ENCODE measurements at regions of chr4 and their contacts with region 1.

Region 1: DNA sequence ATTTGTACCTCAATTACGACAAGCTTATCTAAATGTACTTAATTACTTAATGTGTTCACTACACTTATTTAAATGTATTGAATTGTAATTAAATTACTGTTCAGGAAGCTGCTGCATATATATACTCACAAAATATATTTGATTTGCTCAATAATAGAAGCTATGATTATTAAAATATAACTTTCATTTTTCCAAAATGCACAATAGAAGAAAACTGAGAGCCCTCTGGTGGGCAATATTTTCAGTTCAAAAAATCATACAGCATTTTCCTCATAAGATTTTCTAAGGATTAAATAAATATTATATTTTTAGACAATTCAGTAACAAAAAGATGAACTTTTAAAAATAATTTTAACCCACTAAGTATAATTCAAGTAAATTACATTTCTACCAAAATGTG is 217.3 kb downstream of the DKK2 start:
- DNase-seq: peak; percentile 26
- ATAC-seq: no peak
- H3K4me3 ChIP-seq: no peak overlapping the region
- H3K27ac ChIP-seq: no peak overlapping the region
- H3K4me1 ChIP-seq: no peaks in the 10 kb centered on the region
- H3K27me3 ChIP-seq: no peaks in the 10 kb centered on the region
- CTCF ChIP-seq: peak; percentile 45; the same call in 1 of the 2 replicates

Region 2: GRCh38 chr4:106835919-106836318 is 17.2 kb after region 1 on chr4:
- CTCF ChIA-PET with region 1: interaction called, 10 read pairs
- POLR2A ChIA-PET with region 1: no interaction called
- intact Hi-C with region 1: no loop called
- DNase-seq: no peak
- ATAC-seq: peak; percentile 64
- H3K4me3 ChIP-seq: no peak overlapping the region
- H3K27ac ChIP-seq: no peak overlapping the region
- H3K4me1 ChIP-seq: no peaks in the 10 kb centered on the region
- H3K27me3 ChIP-seq: no peaks in the 10 kb centered on the region
- CTCF ChIP-seq: no peak

Region 3: DNA sequence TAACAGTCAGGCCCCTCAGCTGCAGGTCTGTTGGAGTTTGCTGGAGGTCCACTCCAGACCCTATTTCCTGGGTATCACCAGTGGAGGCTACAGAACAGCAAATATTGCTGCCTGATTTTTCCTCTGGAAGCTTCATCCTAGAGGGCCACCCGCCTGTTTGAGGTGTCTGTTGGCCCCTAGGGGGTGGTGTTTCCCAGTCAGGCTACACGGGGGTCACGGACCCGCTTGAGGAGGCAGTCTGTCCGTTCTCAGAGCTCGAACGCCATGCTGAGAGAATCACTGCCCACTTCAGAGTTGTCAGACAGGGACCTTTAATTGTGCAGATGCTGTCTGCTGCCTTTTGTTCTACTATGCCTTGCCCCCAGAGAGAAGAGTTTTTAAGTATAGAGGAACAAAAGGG is 56.6 kb after region 1 on chr4:
- CTCF ChIA-PET with region 1: no interaction called
- POLR2A ChIA-PET with region 1: no interaction called
- intact Hi-C with region 1: no loop called
- DNase-seq: no peak
- ATAC-seq: no peak
- H3K4me3 ChIP-seq: no peak overlapping the region
- H3K27ac ChIP-seq: no peak overlapping the region
- H3K4me1 ChIP-seq: no peaks in the 10 kb centered on the region
- H3K27me3 ChIP-seq: no peaks in the 10 kb centered on the region
- CTCF ChIP-seq: no peak; the same call in 1 of the 2 replicates

Region 4: GRCh38 chr4:106898621-106899230 is 80.0 kb after region 1 on chr4:
- CTCF ChIA-PET with region 1: no interaction called
- POLR2A ChIA-PET with region 1: interaction called, 4 read pairs
- intact Hi-C with region 1: loop called (anchors 2 kb)
- DNase-seq: peak; percentile 68
- ATAC-seq: peak; percentile 81
- H3K4me3 ChIP-seq: no peak overlapping the region
- H3K27ac ChIP-seq: no peak overlapping the region
- H3K4me1 ChIP-seq: no peaks in the 10 kb centered on the region
- H3K27me3 ChIP-seq: no peaks in the 10 kb centered on the region
- CTCF ChIP-seq: peak; percentile 81

Region 5: GRCh38 chr4:106978046-106978774 is 159.4 kb after region 1 on chr4:
- CTCF ChIA-PET with region 1: no interaction called
- POLR2A ChIA-PET with region 1: no interaction called
- intact Hi-C with region 1: no loop called
- DNase-seq: no peak
- ATAC-seq: no peak
- H3K4me3 ChIP-seq: no peak overlapping the region
- H3K27ac ChIP-seq: no peak overlapping the region
- H3K4me1 ChIP-seq: no peaks in the 10 kb centered on the region
- H3K27me3 ChIP-seq: no peaks in the 10 kb centered on the region; the same call in 1 of the 2 replicates
- CTCF ChIP-seq: no peak